ENCODE measurements at regions of chr12 and their contacts with region 1.

Region 1: GRCh38 chr12:101919447-101919846 is 42.1 kb downstream of the DRAM1 start:
- DNase-seq: no peak
- ATAC-seq: no peak
- H3K4me3 ChIP-seq: no peak overlapping the region
- H3K4me3 Mint-ChIP-seq: no peak overlapping the region
- H3K27ac ChIP-seq: no peak overlapping the region
- H3K27ac Mint-ChIP-seq: no peak overlapping the region
- H3K4me1 ChIP-seq: peaks cover 10 to 13% of the 10 kb centered on the region in 2 donors
- H3K4me1 Mint-ChIP-seq: peaks cover 19% of the 10 kb centered on the region
- H3K27me3 ChIP-seq: no peaks in the 10 kb centered on the region
- H3K27me3 Mint-ChIP-seq: no peaks in the 10 kb centered on the region
- CTCF ChIP-seq: no peak

Region 2: GRCh38 chr12:101414533-101415119 is 504.8 kb before region 1 on chr12:
- CTCF ChIA-PET with region 1: no interaction called
- POLR2A ChIA-PET with region 1: no interaction called
- intact Hi-C with region 1: loop called (anchors 1 kb)
- DNase-seq: peak; percentile 52
- ATAC-seq: no peak
- H3K4me3 ChIP-seq: no peak overlapping the region
- H3K4me3 Mint-ChIP-seq: no peak overlapping the region
- H3K27ac ChIP-seq: no peak overlapping the region
- H3K27ac Mint-ChIP-seq: no peak overlapping the region
- H3K4me1 ChIP-seq: no peaks in the 10 kb centered on the region
- H3K4me1 Mint-ChIP-seq: no peaks in the 10 kb centered on the region
- H3K27me3 ChIP-seq: peaks cover 0 to 3% (median 0%) of the 10 kb centered on the region in 4 experiments
- H3K27me3 Mint-ChIP-seq: peaks cover 5% of the 10 kb centered on the region
- CTCF ChIP-seq: peak; percentile 79

Region 3: GRCh38 chr12:101876861-101877815 is 42.3 kb before region 1 on chr12 and contains the start of gene DRAM1:
- CTCF ChIA-PET with region 1: interaction called, 4 read pairs
- POLR2A ChIA-PET with region 1: no interaction called
- intact Hi-C with region 1: loop called (anchors 1 kb)
- DNase-seq: peak; percentile 90
- ATAC-seq: peak; percentile 87
- H3K4me3 ChIP-seq: peak within 1 kb of the TSS; percentile 80 to 92 (median 86)
- H3K4me3 Mint-ChIP-seq: peak within 1 kb of the TSS; percentile 90
- H3K27ac ChIP-seq: peak within 1 kb of the TSS; percentile 84 to 85
- H3K27ac Mint-ChIP-seq: peak within 1 kb of the TSS; percentile 88
- H3K4me1 ChIP-seq: peaks cover 6 to 14% of the 10 kb centered on the region in 2 donors
- H3K4me1 Mint-ChIP-seq: peaks cover 20% of the 10 kb centered on the region
- H3K27me3 ChIP-seq: no peaks in the 10 kb centered on the region
- H3K27me3 Mint-ChIP-seq: no peaks in the 10 kb centered on the region
- CTCF ChIP-seq: peak; percentile 25
- total RNA-seq, gene DRAM1: 7.9 and 10.2 TPM in 2 replicates

Region 4: GRCh38 chr12:101995684-101996083 is 76.2 kb after region 1 on chr12:
- CTCF ChIA-PET with region 1: no interaction called
- POLR2A ChIA-PET with region 1: no interaction called
- intact Hi-C with region 1: no loop called
- DNase-seq: no peak
- ATAC-seq: no peak
- H3K4me3 ChIP-seq: no peak overlapping the region
- H3K4me3 Mint-ChIP-seq: no peak overlapping the region
- H3K27ac ChIP-seq: no peak overlapping the region
- H3K27ac Mint-ChIP-seq: no peak overlapping the region
- H3K4me1 ChIP-seq: no peaks in the 10 kb centered on the region
- H3K4me1 Mint-ChIP-seq: no peaks in the 10 kb centered on the region
- H3K27me3 ChIP-seq: no peaks in the 10 kb centered on the region
- H3K27me3 Mint-ChIP-seq: peaks cover 10% of the 10 kb centered on the region
- CTCF ChIP-seq: no peak

Region 5: DNA sequence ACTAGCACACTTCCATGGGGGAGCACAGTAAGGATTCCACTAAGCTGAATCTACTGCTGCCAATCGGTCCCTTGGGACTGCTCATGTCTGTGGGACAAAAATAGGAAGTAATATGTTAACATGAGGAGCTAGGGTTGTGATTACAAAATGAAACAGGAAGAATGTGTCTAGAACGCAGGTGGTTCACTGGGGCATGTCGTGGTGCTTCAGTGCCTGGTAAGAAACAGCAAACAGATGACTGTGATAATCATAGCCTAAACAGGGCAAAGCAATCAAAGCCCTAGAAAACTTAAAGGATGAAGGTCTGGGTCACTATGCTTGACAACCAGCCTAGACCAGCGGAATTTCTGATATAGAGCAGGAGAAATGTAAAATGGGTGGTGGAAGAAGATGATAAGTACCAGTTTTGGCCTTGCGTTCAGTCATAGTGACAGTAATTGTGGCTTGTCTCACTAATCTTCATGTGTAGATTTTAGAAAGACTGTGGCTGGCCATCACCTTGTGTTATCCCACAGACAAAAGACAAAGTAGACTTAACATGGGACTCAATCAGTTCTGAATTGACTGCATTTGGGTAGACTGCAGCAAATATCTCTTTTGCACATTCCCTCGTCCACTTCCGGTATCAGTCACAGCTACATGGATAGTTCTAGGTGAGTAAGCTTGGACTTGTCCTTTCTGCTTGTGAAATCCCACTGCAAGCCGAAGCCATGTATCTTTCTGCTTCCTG is 91.0 kb after region 1 on chr12:
- CTCF ChIA-PET with region 1: no interaction called
- POLR2A ChIA-PET with region 1: interaction called, 4 read pairs
- intact Hi-C with region 1: loop called (anchors 1 kb)
- DNase-seq: peak; percentile 90
- ATAC-seq: peak; percentile 97
- H3K4me3 ChIP-seq: peak overlapping the region in 3 of 5 experiments; percentile 16 to 43 (median 20)
- H3K4me3 Mint-ChIP-seq: peak overlapping the region; percentile 73
- H3K27ac ChIP-seq: peak overlapping the region; percentile 55 to 79
- H3K27ac Mint-ChIP-seq: peak overlapping the region; percentile 91
- H3K4me1 ChIP-seq: peaks cover 20 to 22% of the 10 kb centered on the region in 2 donors
- H3K4me1 Mint-ChIP-seq: peaks cover 35% of the 10 kb centered on the region
- H3K27me3 ChIP-seq: no peaks in the 10 kb centered on the region
- H3K27me3 Mint-ChIP-seq: no peaks in the 10 kb centered on the region
- CTCF ChIP-seq: no peak

Region 6: GRCh38 chr12:102119674-102120563 is 200.5 kb after region 1 on chr12 and contains the starts of genes NUP37 and PARPBP:
- CTCF ChIA-PET with region 1: no interaction called
- POLR2A ChIA-PET with region 1: no interaction called
- intact Hi-C with region 1: loop called (anchors 2 kb)
- DNase-seq: peak; percentile 92
- ATAC-seq: peak; percentile 98
- H3K4me3 ChIP-seq: peak within 1 kb of the TSS; percentile 82 to 90 (median 84)
- H3K4me3 Mint-ChIP-seq: peak within 1 kb of the TSS; percentile 89
- H3K27ac ChIP-seq: peak within 1 kb of the TSS; percentile 80 to 88
- H3K27ac Mint-ChIP-seq: peak within 1 kb of the TSS; percentile 91
- H3K4me1 ChIP-seq: peaks cover 15 to 18% of the 10 kb centered on the region in 2 donors
- H3K4me1 Mint-ChIP-seq: peaks cover 16% of the 10 kb centered on the region
- H3K27me3 ChIP-seq: no peaks in the 10 kb centered on the region
- H3K27me3 Mint-ChIP-seq: no peaks in the 10 kb centered on the region
- CTCF ChIP-seq: no peak
- total RNA-seq, gene NUP37: 19.1 and 22.1 TPM in 2 replicates
- total RNA-seq, gene PARPBP: 5.2 and 6.6 TPM in 2 replicates

Region 7: GRCh38 chr12:102215992-102216691 is 296.7 kb after region 1 on chr12:
- CTCF ChIA-PET with region 1: no interaction called
- POLR2A ChIA-PET with region 1: no interaction called
- intact Hi-C with region 1: no loop called
- DNase-seq: no peak
- ATAC-seq: no peak
- H3K4me3 ChIP-seq: no peak overlapping the region
- H3K4me3 Mint-ChIP-seq: no peak overlapping the region
- H3K27ac ChIP-seq: no peak overlapping the region
- H3K27ac Mint-ChIP-seq: no peak overlapping the region
- H3K4me1 ChIP-seq: no peaks in the 10 kb centered on the region
- H3K4me1 Mint-ChIP-seq: no peaks in the 10 kb centered on the region
- H3K27me3 ChIP-seq: no peaks in the 10 kb centered on the region
- H3K27me3 Mint-ChIP-seq: no peaks in the 10 kb centered on the region
- CTCF ChIP-seq: no peak

Region 8: GRCh38 chr12:102702447-102703114 is 783.1 kb after region 1 on chr12:
- CTCF ChIA-PET with region 1: interaction called, 24 read pairs
- POLR2A ChIA-PET with region 1: no interaction called
- intact Hi-C with region 1: loop called (anchors 1 kb)
- DNase-seq: peak; percentile 73
- ATAC-seq: peak; percentile 33
- H3K4me3 ChIP-seq: no peak overlapping the region
- H3K4me3 Mint-ChIP-seq: no peak overlapping the region
- H3K27ac ChIP-seq: no peak overlapping the region
- H3K27ac Mint-ChIP-seq: no peak overlapping the region
- H3K4me1 ChIP-seq: no peaks in the 10 kb centered on the region
- H3K4me1 Mint-ChIP-seq: no peaks in the 10 kb centered on the region
- H3K27me3 ChIP-seq: peaks cover 0 to 4% (median 0%) of the 10 kb centered on the region in 4 experiments
- H3K27me3 Mint-ChIP-seq: peaks cover 15% of the 10 kb centered on the region
- CTCF ChIP-seq: peak; percentile 79